ENCODE measurements at regions of chr5 and their contacts with region 1.

Region 1: DNA sequence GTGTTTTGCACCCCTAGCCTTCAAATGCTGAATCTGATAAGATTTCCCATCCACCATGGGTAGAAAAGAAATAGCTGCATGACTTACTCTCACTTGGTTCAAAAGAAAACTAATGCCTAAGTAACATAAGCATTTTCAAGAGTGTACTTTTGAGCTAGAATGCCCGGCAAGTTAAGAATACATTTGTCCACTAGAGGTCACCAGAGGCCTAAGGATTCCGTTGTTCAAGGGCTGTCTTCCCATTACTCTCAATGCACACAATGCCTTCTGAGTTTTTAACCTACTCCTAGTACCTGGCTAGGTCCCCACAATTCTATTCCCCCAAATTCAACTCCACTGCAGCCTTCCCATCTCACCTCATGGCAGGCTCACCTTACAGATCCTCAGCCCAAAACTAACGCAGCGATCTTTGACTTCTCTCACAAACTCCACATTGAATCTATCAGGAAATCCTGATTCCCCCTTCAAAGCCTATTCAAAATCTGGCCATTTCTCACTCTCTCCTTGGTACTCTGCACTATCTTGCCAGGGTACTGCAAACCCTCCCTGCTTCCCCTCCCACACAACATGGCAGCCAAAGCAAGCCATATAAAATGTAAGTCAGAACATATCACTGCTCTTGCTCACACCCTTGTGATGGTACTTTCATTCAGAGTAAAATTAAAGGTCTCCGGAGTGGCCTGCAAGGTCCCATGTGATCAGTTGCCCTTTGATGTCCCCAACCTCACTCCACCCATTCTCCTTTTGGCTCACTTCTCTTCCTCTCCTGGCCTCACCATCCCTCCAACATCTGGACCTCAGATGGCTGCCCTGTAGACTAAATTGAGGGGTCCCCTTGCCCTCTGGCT is 13.4 kb downstream of the OXCT1 start:
- DNase-seq: peak; percentile 64 to 86 (median 70)
- ATAC-seq: peak; percentile 98
- H3K4me3 ChIP-seq: no peak overlapping the region
- H3K27ac ChIP-seq: no peak overlapping the region
- H3K4me1 ChIP-seq: no peaks in the 10 kb centered on the region
- H3K27me3 ChIP-seq: no peaks in the 10 kb centered on the region; a peak in 1 of 5 replicates
- CTCF ChIP-seq: peak; percentile 74 to 95 (median 81)
- EP300 ChIP-seq: no peak
- POLR2A ChIP-seq: no peak
- RAD21 ChIP-seq: peak; percentile 96

Region 2: GRCh38 chr5:42005561-42006153 is 148.8 kb after region 1 on chr5:
- CTCF ChIA-PET with region 1: no interaction called
- POLR2A ChIA-PET with region 1: no interaction called
- in situ Hi-C with region 1: no loop called
- intact Hi-C with region 1: loop called (anchors 1 kb)
- DNase-seq: peak; percentile 20 to 53 (median 47)
- ATAC-seq: peak; percentile 81
- H3K4me3 ChIP-seq: no peak overlapping the region
- H3K27ac ChIP-seq: no peak overlapping the region
- H3K4me1 ChIP-seq: no peaks in the 10 kb centered on the region
- H3K27me3 ChIP-seq: no peaks in the 10 kb centered on the region; a peak in 1 of 5 replicates
- CTCF ChIP-seq: peak; percentile 35 to 70 (median 61); a peak in 5 of 6 replicates
- EP300 ChIP-seq: no peak
- POLR2A ChIP-seq: no peak
- RAD21 ChIP-seq: peak; percentile 10 to 45; a peak in 2 of 4 replicates

Region 3: DNA sequence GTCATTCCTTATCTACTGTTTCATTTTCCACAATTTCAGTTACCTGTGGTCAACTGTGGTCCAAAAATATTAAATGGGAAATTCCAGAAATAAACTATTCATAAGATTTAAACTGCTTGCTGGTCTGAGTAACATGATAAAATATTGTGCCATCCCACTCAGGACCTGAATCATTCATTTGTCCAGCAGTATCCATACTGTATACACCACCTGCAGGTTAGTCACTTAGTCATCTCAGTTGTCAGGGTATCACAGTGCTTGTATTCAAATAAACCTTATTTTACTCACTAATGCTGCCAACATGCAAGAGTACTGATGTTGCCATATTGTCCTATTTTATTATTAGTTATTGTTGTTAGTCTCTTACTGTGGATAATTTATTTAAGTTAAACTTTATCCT is 208.0 kb after region 1 on chr5:
- CTCF ChIA-PET with region 1: interaction called, 4 read pairs
- POLR2A ChIA-PET with region 1: no interaction called
- in situ Hi-C with region 1: loop called (anchors 5 kb)
- intact Hi-C with region 1: no loop called
- DNase-seq: no peak
- ATAC-seq: no peak
- H3K4me3 ChIP-seq: no peak overlapping the region
- H3K27ac ChIP-seq: no peak overlapping the region
- H3K4me1 ChIP-seq: no peaks in the 10 kb centered on the region
- H3K27me3 ChIP-seq: 0 out of 5 replicates have a peak, but pooled peaks cover 0 to 8% of the 10 kb centered on the region in 2 experiments
- CTCF ChIP-seq: no peak
- EP300 ChIP-seq: no peak
- POLR2A ChIP-seq: no peak
- RAD21 ChIP-seq: no peak

Region 4: GRCh38 chr5:42656651-42657015 is 799.8 kb after region 1 on chr5:
- CTCF ChIA-PET with region 1: interaction called, 3 read pairs
- POLR2A ChIA-PET with region 1: no interaction called
- in situ Hi-C with region 1: no loop called
- intact Hi-C with region 1: loop called (anchors 10 kb)
- DNase-seq: no peak
- ATAC-seq: no peak
- H3K4me3 ChIP-seq: no peak overlapping the region
- H3K27ac ChIP-seq: no peak overlapping the region
- H3K4me1 ChIP-seq: no peaks in the 10 kb centered on the region
- H3K27me3 ChIP-seq: no peaks in the 10 kb centered on the region; a peak in 1 of 5 replicates
- CTCF ChIP-seq: peak in 2 of 3 experiments; percentile 7 to 42; a peak in 3 of 6 replicates
- EP300 ChIP-seq: no peak
- POLR2A ChIP-seq: no peak
- RAD21 ChIP-seq: peak; percentile 36 to 57

Region 5: GRCh38 chr5:42889311-42889933 is 1032.6 kb after region 1 on chr5:
- CTCF ChIA-PET with region 1: interaction called, 11 read pairs
- POLR2A ChIA-PET with region 1: no interaction called
- in situ Hi-C with region 1: no loop called
- intact Hi-C with region 1: loop called (anchors 5 kb)
- DNase-seq: peak; percentile 83 to 94 (median 86)
- ATAC-seq: peak; percentile 96
- H3K4me3 ChIP-seq: no peak overlapping the region
- H3K27ac ChIP-seq: no peak overlapping the region
- H3K4me1 ChIP-seq: peaks cover 0 to 7% of the 10 kb centered on the region in 2 experiments; a peak in 2 of 5 replicates
- H3K27me3 ChIP-seq: no peaks in the 10 kb centered on the region; a peak in 1 of 5 replicates
- CTCF ChIP-seq: peak; percentile 92 to 98 (median 94)
- EP300 ChIP-seq: peak; percentile 56; the same call in 1 of the 2 replicates
- POLR2A ChIP-seq: no peak
- RAD21 ChIP-seq: peak; percentile 97 to 99

Measured in K562 (cell line).